GM10248 (cell line): ENCODE measurements at regions of chr1 and their contacts with region 1.

Region 1: GRCh38 chr1:101238681-101239094 is 1.9 kb downstream of the S1PR1 start:
- DNase-seq: peak; percentile 75
- CTCF ChIP-seq: peak; percentile 93

Region 2: GRCh38 chr1:101025657-101026504 is 212.8 kb before region 1 on chr1 and contains the start of gene DPH5:
- CTCF ChIA-PET with region 1: interaction called, 10 read pairs
- POLR2A ChIA-PET with region 1: interaction called, 5 read pairs
- DNase-seq: peak; percentile 84
- CTCF ChIP-seq: no peak

Region 3: DNA sequence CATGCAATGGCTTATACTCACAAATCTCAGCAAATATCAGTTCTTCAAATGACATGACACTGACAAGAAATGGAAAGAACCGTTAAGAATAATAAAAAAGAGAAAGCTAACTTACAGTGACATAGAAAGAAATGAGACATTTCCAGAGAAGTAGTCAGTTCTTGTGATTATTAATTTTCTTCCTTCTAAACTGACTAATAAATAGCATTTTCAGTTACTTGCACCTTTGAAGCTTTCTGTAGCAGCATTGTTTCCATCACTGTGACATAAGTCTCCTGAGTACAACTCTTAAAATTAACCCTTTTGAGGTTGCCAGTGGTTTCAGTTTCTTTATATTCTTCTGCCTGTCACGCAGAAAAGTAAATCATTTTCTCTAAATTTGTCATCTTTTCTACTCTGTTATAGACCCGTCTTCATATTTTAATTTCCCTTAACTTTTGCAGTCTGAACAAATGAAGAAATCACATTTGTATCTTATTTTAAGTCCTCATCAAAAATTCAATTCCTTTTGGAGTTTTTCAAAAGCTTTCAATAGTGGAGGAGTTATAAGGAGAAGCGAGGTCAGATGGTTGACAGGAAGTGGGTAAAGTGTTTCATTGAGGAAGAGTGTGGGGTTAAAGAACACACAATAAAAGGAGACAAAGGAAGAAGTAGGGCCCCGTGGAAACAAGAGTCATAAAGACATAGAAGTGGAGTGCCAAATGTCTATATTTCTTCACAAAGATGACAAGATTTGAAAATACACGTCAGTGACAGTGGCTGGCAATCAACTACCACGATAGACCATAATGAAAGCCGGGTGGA is 59.8 kb before region 1 on chr1:
- CTCF ChIA-PET with region 1: interaction called, 18 read pairs
- POLR2A ChIA-PET with region 1: no interaction called
- DNase-seq: peak; percentile 62
- CTCF ChIP-seq: no peak

Region 4: DNA sequence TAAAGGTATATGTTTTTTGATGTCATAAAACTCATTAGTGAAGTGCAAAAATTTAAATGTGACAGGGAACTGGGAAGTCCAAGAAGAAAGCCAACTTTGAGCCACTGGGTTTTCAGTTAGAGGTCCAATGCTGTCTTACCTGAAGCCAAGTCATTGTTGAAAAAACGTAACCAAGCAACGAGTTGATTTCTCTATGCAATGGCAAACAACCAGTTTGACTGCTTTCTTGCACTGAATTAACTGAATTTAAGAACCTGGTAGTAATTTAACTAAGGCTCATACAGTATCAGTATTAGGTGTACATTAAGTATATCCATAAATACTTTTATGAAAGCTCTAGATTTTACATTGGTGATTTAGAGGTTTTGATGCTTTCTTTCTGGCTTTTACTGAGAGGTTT is 22.1 kb before region 1 on chr1:
- CTCF ChIA-PET with region 1: interaction called, 16 read pairs
- POLR2A ChIA-PET with region 1: interaction called, 4 read pairs
- DNase-seq: no peak
- CTCF ChIP-seq: no peak

Region 5: GRCh38 chr1:101228424-101229134 is 10.1 kb before region 1 on chr1:
- CTCF ChIA-PET with region 1: interaction called, 16 read pairs
- POLR2A ChIA-PET with region 1: no interaction called
- DNase-seq: no peak
- CTCF ChIP-seq: no peak